H1 (cell line): ENCODE measurements at regions of chr17 and their contacts with region 1.

Region 1: DNA sequence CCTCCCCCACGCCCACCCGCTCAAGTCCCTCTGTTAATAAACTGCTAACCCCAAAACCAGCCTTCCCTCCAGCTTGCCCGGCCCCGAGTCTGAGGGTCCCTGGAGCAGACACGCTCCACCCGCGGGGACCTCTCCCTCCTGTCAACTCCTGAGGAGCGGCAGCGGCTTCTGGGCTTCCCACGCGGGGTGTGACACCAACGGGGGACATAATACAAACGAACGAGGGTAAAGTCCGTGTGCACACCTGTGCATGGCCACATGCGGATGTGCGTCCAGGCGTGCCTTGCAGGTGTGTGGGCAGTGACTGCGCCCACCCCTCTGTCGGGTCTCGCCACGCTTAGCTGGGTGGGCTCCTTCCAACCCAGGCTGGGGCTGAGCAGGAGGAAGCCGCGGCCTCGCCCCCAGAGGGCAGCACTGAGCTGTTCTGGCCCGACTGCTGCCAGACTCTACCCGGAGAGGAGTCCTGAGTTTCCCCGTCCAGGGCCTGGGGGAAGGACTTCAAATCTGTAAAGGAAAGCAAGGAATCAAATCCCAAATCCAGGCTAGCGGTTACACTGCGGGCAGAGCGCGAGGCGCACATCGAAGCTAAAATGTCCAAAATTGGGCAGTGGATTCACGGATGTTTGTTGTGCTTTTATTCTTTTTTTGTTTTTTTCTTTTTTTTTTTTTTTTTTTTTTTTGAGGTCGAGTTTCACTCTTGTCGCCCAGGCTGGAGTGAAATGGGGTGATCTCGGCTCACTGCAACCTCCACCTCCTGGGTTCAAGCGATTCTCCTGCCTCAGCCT is 24.2 kb upstream of the KRT17 start:
- DNase-seq: peak; percentile 74 to 96
- H3K4me3 ChIP-seq: peak overlapping the region; percentile 26 to 61 (median 44); a peak in 7 of 8 replicates
- H3K27ac ChIP-seq: no peak overlapping the region
- H3K4me1 ChIP-seq: peaks cover 0 to 6% (median 2%) of the 10 kb centered on the region in 4 experiments; a peak in 4 of 7 replicates
- H3K27me3 ChIP-seq: no peaks in the 10 kb centered on the region; a peak in 2 of 7 replicates
- CTCF ChIP-seq: peak; percentile 91 to 97 (median 96)
- EP300 ChIP-seq: no peak
- POLR2A ChIP-seq: no peak
- RAD21 ChIP-seq: peak; percentile 64 to 74

Region 2: GRCh38 chr17:41521574-41522261 is 126.9 kb before region 1 on chr17:
- CTCF ChIA-PET with region 1: interaction called, 13 read pairs
- POLR2A ChIA-PET with region 1: interaction called, 5 read pairs
- DNase-seq: no peak
- H3K4me3 ChIP-seq: no peak overlapping the region
- H3K27ac ChIP-seq: no peak overlapping the region
- H3K4me1 ChIP-seq: peaks cover 0 to 18% (median 11%) of the 10 kb centered on the region in 4 experiments; a peak in 6 of 7 replicates
- H3K27me3 ChIP-seq: no peaks in the 10 kb centered on the region
- CTCF ChIP-seq: no peak
- EP300 ChIP-seq: no peak
- POLR2A ChIP-seq: no peak
- RAD21 ChIP-seq: no peak

Region 3: GRCh38 chr17:41579484-41580243 is 68.9 kb before region 1 on chr17:
- CTCF ChIA-PET with region 1: interaction called, 35 read pairs
- POLR2A ChIA-PET with region 1: interaction called, 3 read pairs
- DNase-seq: peak; percentile 78 to 98
- H3K4me3 ChIP-seq: no peak overlapping the region
- H3K27ac ChIP-seq: no peak overlapping the region
- H3K4me1 ChIP-seq: peaks cover 0 to 4% (median 2%) of the 10 kb centered on the region in 4 experiments; a peak in 3 of 7 replicates
- H3K27me3 ChIP-seq: peaks cover 0 to 2% (median 0%) of the 10 kb centered on the region in 4 experiments; a peak in 1 of 7 replicates
- CTCF ChIP-seq: peak; percentile 85 to 99 (median 88)
- EP300 ChIP-seq: no peak
- POLR2A ChIP-seq: peak in 1 of 2 experiments; percentile 75; a peak in 2 of 3 replicates
- RAD21 ChIP-seq: peak; percentile 63 to 76

Region 4: GRCh38 chr17:41602524-41602923 is 46.1 kb before region 1 on chr17:
- CTCF ChIA-PET with region 1: interaction called, 43 read pairs
- POLR2A ChIA-PET with region 1: no interaction called
- DNase-seq: no peak
- H3K4me3 ChIP-seq: no peak overlapping the region
- H3K27ac ChIP-seq: no peak overlapping the region
- H3K4me1 ChIP-seq: no peaks in the 10 kb centered on the region
- H3K27me3 ChIP-seq: no peaks in the 10 kb centered on the region
- CTCF ChIP-seq: no peak
- EP300 ChIP-seq: no peak
- POLR2A ChIP-seq: no peak
- RAD21 ChIP-seq: no peak

Region 5: DNA sequence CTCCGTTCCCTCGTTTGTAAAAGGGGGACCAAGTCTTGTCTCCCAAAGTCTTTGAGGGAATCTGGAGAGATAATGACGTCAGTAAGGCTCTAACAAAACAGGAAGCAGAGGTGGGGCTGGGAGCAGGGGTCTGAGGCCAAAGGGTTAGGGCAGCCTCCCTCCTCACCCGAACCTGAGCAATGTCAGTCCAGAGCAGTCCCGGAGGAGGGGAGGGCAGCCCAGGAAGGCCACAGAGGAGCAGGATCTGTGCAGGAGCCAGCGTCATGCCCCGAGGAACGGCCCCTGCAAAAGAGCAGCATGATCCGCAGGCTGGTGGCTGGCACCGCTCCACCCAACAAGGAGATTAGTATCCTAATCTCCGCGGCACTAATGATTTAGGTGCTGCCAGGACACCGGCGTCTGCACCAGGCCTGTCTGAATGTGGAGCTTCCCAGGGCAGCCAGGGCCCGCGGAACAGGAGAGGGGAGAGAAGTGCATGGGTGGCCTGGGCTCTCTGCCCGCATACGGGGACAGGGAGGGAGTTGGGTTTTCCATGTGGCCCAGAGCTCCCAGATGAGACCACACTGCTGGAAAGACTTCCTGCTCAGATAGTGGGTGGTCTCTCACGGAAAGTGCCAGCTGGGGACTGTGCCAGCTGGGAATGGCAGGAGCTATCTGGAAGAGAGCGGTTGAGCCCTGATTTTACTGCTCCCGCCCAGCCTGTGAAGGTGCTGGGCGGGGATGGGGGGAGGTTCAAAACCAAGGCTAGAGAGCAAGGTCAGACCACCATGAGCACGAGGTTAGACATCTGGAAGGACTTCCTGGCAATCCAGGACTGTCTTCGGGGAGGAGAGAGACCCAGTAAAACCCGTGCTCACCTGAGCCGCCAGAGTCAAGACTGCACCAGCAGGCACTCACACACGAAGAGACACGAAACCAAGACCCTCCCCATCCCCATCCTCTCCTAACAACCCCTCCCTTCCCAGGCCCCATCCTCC is 13.2 kb before region 1 on chr17:
- CTCF ChIA-PET with region 1: interaction called, 103 read pairs
- POLR2A ChIA-PET with region 1: interaction called, 3 read pairs
- DNase-seq: no peak
- H3K4me3 ChIP-seq: no peak overlapping the region
- H3K27ac ChIP-seq: no peak overlapping the region
- H3K4me1 ChIP-seq: peaks cover 0 to 19% (median 4%) of the 10 kb centered on the region in 4 experiments; a peak in 2 of 7 replicates
- H3K27me3 ChIP-seq: peaks cover 0 to 3% (median 0%) of the 10 kb centered on the region in 4 experiments; a peak in 1 of 7 replicates
- CTCF ChIP-seq: no peak
- EP300 ChIP-seq: no peak
- POLR2A ChIP-seq: no peak
- RAD21 ChIP-seq: no peak

Region 6: GRCh38 chr17:41688699-41689496 is 40.3 kb after region 1 on chr17 and contains the start of gene EIF1:
- CTCF ChIA-PET with region 1: interaction called, 4 read pairs
- POLR2A ChIA-PET with region 1: interaction called, 23 read pairs
- DNase-seq: peak; percentile 100
- H3K4me3 ChIP-seq: peak within 1 kb of the TSS; percentile 92 to 99 (median 94)
- H3K27ac ChIP-seq: peak within 1 kb of the TSS; percentile 97
- H3K4me1 ChIP-seq: peaks cover 0 to 3% (median 2%) of the 10 kb centered on the region in 4 experiments; a peak in 4 of 7 replicates
- H3K27me3 ChIP-seq: no peaks in the 10 kb centered on the region
- CTCF ChIP-seq: no peak
- EP300 ChIP-seq: peak in 1 of 2 experiments; percentile 48; a peak in 1 of 3 replicates
- POLR2A ChIP-seq: peak; percentile 99
- RAD21 ChIP-seq: no peak
- total RNA-seq, gene EIF1: 528 and 539 TPM in 2 replicates